Activated T-helper 1 cell treated with anti-CD3 and anti-CD28 coated beads, Interleukin-12 subunit alpha, Interleukin-12 subunit beta, Interleukin-2, Interleukin-4 antibody, amounts not matched to agents 30 ng/mL and 10 ng/mL and 1 ng/mL, durations not matched to agents 14 hours and 24 hours and 36 hours (primary cell): ENCODE measurements at regions of chr9 and their contacts with region 1.

Region 1: GRCh38 chr9:136849038-136849959 is at the start of gene PHPT1:
- DNase-seq: peak; percentile 97
- H3K4me3 Mint-ChIP-seq: peak within 1 kb of the TSS; percentile 94
- H3K27ac Mint-ChIP-seq: peak within 1 kb of the TSS; percentile 89
- H3K4me1 Mint-ChIP-seq: no peaks in the 10 kb centered on the region
- H3K27me3 Mint-ChIP-seq: peaks cover 6% of the 10 kb centered on the region
- total RNA-seq, gene PHPT1: 134 and 139 TPM in 2 replicates

Region 2: GRCh38 chr9:136807281-136808074 is 41.8 kb before region 1 on chr9 and contains the start of gene RABL6:
- intact Hi-C with region 1: loop called (anchors 1 kb)
- DNase-seq: peak; percentile 82
- H3K4me3 Mint-ChIP-seq: peak within 1 kb of the TSS; percentile 85
- H3K27ac Mint-ChIP-seq: peak within 1 kb of the TSS; percentile 90
- H3K4me1 Mint-ChIP-seq: peaks cover 28% of the 10 kb centered on the region
- H3K27me3 Mint-ChIP-seq: peaks cover 4% of the 10 kb centered on the region
- total RNA-seq, gene RABL6: 109 and 114 TPM in 2 replicates

Region 3: DNA sequence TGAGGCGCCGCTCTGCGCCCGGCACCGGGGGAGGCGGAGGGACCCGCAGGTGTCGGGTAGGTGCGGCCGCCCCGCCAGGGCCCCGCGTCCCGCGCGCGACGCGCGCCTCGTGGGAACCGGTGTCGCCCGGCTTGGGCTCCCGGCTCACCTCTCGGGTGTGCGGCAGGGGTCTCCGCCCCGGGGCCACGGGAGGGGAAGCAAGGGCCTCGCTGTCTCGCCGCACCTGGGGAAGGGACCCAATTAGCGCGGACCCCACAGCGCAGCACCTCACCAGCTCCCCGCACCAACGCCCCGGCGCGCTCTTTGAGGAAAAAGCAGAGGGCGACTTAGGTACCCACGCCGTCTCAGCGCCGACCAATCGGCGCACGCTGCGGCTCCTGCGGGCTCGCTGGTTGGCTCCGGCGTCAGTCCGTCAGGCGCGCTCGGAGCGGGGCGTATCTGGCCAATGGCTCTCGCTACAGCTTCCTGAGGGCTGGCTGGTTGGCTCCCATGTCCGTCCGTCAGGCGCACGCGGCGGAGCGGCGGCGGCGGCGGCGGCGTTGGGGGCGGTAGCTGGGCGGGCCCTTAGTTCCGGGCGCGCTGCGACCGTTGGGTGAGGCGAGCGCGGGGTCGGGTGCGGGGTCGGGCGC is 36.8 kb after region 1 on chr9 and contains the start of gene TRAF2:
- intact Hi-C with region 1: loop called (anchors 1 kb)
- DNase-seq: peak; percentile 99
- H3K4me3 Mint-ChIP-seq: peak within 1 kb of the TSS; percentile 98
- H3K27ac Mint-ChIP-seq: peak within 1 kb of the TSS; percentile 93
- H3K4me1 Mint-ChIP-seq: peaks cover 44% of the 10 kb centered on the region
- H3K27me3 Mint-ChIP-seq: no peaks in the 10 kb centered on the region
- total RNA-seq, gene TRAF2: 67.4 and 76.3 TPM in 2 replicates

Region 4: GRCh38 chr9:137046098-137046787 is 196.9 kb after region 1 on chr9 and contains the start of gene NPDC1:
- intact Hi-C with region 1: loop called (anchors 5 kb)
- DNase-seq: peak; percentile 81
- H3K4me3 Mint-ChIP-seq: peak within 1 kb of the TSS; percentile 77
- H3K27ac Mint-ChIP-seq: peak within 1 kb of the TSS; percentile 44
- H3K4me1 Mint-ChIP-seq: peaks cover 5% of the 10 kb centered on the region
- H3K27me3 Mint-ChIP-seq: peaks cover 29% of the 10 kb centered on the region
- total RNA-seq, gene NPDC1: 78.2 and 80.1 TPM in 2 replicates